A673 (cell line): ENCODE measurements at regions of chr4 and their contacts with region 1.

Region 1: DNA sequence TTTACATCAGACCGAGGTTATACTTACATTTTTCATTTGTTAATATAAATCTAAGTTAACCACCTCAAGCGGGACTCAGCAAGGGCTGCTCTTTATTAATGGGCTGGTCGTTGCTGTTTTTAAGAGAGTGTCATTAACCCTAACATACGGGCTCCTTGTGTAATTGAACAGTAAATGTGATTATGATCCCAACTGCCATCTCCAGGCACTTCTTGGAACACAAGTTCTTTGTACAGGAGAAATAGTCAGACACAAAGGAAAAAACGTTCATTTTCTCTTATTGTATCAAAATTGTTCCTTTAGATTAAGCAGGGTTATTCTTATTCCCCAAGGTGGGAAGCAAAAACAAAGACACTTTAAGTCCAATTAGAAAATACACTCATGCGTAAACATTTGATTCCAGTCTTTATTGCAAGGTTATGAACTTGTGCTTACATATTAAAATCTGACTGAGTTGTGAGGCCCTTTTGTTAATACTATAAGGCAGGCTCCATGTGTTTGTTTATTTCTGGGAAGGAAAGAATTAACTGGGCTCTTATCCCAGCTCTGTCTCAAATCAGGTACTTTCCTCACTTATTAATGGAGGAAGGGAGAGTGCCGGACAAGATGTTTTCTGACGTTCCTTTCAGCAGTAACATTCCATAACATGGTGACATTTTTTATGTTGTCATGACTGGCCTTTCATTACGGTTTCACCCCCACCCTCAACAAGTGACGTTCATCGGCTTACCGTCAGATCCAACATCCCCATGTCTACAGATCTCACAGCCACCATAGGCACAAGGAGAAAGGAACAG is 95.9 kb downstream of the RASL11B start:
- DNase-seq: no peak
- H3K4me3 ChIP-seq: no peak overlapping the region
- H3K27ac ChIP-seq: no peak overlapping the region
- H3K4me1 ChIP-seq: no peaks in the 10 kb centered on the region
- H3K27me3 ChIP-seq: no peaks in the 10 kb centered on the region
- CTCF ChIP-seq: no peak

Region 2: GRCh38 chr4:53103481-53103880 is 145.4 kb after region 1 on chr4:
- CTCF ChIA-PET with region 1: no interaction called
- POLR2A ChIA-PET with region 1: interaction called, 20 read pairs
- intact Hi-C with region 1: no loop called
- DNase-seq: no peak
- H3K4me3 ChIP-seq: no peak overlapping the region
- H3K27ac ChIP-seq: no peak overlapping the region
- H3K4me1 ChIP-seq: no peaks in the 10 kb centered on the region
- H3K27me3 ChIP-seq: no peaks in the 10 kb centered on the region
- CTCF ChIP-seq: no peak